ENCODE measurements at regions of chr12 and their contacts with region 1.

Region 1: GRCh38 chr12:56751712-56752598 is at the start of gene PRIM1:
- DNase-seq: peak; percentile 97
- H3K4me3 Mint-ChIP-seq: peak within 1 kb of the TSS; percentile 98
- H3K27ac Mint-ChIP-seq: peak within 1 kb of the TSS; percentile 99
- H3K4me1 Mint-ChIP-seq: peaks cover 39% of the 10 kb centered on the region
- H3K27me3 Mint-ChIP-seq: no peaks in the 10 kb centered on the region
- total RNA-seq, gene PRIM1: 69.2 and 74.0 TPM in 2 replicates

Region 2: DNA sequence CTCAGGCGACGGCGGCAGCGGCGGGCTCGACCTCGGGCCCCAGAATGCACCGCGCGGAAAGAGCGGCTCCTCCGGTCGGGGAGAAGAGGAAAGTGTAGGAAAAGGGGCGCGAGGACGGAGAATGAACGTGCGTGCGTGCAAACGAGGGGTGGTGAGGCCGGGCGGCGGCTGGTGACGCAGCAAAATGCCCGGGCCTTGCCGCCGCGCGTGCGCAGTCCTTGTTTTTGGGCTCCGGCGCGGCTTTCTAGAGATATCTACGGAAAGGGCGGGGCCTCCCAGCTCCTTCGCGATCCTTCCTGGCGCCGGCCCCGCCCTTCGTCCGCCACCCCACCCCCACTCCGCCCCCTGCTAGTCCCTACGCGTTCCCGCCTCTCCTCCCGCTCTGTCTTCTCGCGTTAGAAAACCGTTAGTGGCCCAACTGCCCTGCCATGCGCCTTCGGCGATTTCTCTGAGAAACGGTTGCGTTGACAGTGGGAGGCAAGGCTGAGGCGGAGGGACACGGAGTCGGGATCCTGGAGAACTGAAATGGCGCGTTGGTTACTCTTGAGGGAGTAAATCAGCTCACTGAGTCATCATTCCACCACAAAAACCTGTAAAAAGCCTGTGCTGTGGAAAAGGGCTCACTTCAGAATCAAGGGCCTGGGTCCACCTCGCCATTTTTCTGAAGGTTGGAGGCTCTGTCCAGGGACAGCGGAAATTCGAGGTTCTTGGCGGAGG is 63.7 kb before region 1 on chr12 and contains the start of gene PTGES3:
- intact Hi-C with region 1: loop called (anchors 1 kb)
- DNase-seq: peak; percentile 99
- H3K4me3 Mint-ChIP-seq: peak within 1 kb of the TSS; percentile 99
- H3K27ac Mint-ChIP-seq: peak within 1 kb of the TSS; percentile 97
- H3K4me1 Mint-ChIP-seq: peaks cover 24% of the 10 kb centered on the region
- H3K27me3 Mint-ChIP-seq: no peaks in the 10 kb centered on the region
- total RNA-seq, gene PTGES3: 351 and 357 TPM in 2 replicates

Region 3: DNA sequence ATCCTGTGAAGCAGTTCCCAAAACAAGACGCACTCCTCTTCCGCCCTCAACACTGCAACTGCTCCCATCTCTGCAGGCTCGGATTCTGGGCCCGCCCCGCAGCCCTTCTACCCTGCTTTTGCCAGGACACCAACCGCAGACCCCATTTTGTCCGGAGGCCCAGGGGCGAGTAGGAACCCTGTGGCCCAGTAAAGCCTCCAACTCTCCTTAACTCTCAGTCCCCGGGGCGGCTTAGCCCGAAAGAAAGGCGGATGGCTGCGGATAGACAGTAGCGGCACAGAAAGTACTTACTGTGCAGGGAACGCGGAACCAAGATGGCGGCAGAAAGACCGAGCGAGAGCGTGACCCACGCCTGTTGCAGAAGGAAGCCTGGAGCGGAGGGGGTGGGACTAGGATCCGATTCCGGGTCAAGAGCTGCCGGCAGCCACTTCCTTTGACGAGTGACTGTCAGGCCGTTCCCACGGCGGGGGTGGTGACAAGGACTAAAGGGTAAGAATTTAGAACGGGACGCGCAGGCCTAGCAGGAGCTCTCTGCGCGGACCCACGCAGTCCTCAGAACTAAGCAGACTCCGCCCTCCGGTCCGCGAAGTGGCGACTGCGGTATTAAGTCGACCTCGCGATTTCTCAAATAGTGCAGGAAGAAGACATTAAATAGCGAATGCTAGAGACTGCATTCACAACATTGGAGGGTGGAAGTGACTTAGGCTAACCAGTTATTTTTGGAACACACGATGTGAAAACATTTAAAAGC is 26.8 kb before region 1 on chr12 and contains the start of gene NACA:
- intact Hi-C with region 1: loop called (anchors 1 kb)
- DNase-seq: peak; percentile 99
- H3K4me3 Mint-ChIP-seq: peak within 1 kb of the TSS; percentile 99
- H3K27ac Mint-ChIP-seq: peak within 1 kb of the TSS; percentile 100
- H3K4me1 Mint-ChIP-seq: peaks cover 43% of the 10 kb centered on the region
- H3K27me3 Mint-ChIP-seq: no peaks in the 10 kb centered on the region
- total RNA-seq, gene NACA: 1,041 and 1,057 TPM in 2 replicates

Region 4: DNA sequence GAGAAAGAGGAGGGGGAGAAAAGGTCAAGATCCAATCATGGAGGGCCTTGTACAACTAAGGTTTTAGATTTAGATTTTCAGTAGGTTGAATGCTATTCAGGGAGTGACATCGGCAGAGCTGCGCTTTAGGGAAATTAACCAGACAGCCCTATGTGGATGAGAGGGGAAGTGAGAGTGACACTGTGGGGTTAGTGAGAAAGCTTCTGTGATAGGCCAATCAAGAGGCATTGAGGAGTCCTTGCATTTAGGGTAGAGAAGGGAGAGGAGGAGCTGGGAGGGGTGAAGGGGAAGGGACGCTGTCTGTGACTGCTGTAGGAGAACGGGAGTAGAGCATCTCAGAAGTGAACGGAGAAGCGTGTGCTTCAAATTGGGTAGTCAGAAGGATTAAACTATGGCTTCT is 14.6 kb after region 1 on chr12:
- intact Hi-C with region 1: no loop called
- DNase-seq: no peak
- H3K4me3 Mint-ChIP-seq: no peak overlapping the region
- H3K27ac Mint-ChIP-seq: no peak overlapping the region
- H3K4me1 Mint-ChIP-seq: no peaks in the 10 kb centered on the region
- H3K27me3 Mint-ChIP-seq: peaks cover 3% of the 10 kb centered on the region

Region 5: GRCh38 chr12:56897844-56898361 is 145.9 kb after region 1 on chr12:
- intact Hi-C with region 1: no loop called
- DNase-seq: no peak
- H3K4me3 Mint-ChIP-seq: no peak overlapping the region
- H3K27ac Mint-ChIP-seq: no peak overlapping the region
- H3K4me1 Mint-ChIP-seq: no peaks in the 10 kb centered on the region
- H3K27me3 Mint-ChIP-seq: no peaks in the 10 kb centered on the region

Region 6: GRCh38 chr12:56987551-56988053 is 235.6 kb after region 1 on chr12:
- intact Hi-C with region 1: loop called (anchors 1 kb)
- DNase-seq: peak; percentile 92
- H3K4me3 Mint-ChIP-seq: peak overlapping the region; percentile 24
- H3K27ac Mint-ChIP-seq: no peak overlapping the region
- H3K4me1 Mint-ChIP-seq: peaks cover 24% of the 10 kb centered on the region
- H3K27me3 Mint-ChIP-seq: peaks cover 8% of the 10 kb centered on the region

Region 7: GRCh38 chr12:57005980-57006808 is 254.2 kb after region 1 on chr12 and contains the start of gene ZBTB39:
- intact Hi-C with region 1: loop called (anchors 1 kb)
- DNase-seq: peak; percentile 92
- H3K4me3 Mint-ChIP-seq: peak within 1 kb of the TSS; percentile 93
- H3K27ac Mint-ChIP-seq: peak within 1 kb of the TSS; percentile 86
- H3K4me1 Mint-ChIP-seq: peaks cover 44% of the 10 kb centered on the region
- H3K27me3 Mint-ChIP-seq: no peaks in the 10 kb centered on the region
- total RNA-seq, gene ZBTB39: 11.0 TPM in 2 replicates

Region 8: DNA sequence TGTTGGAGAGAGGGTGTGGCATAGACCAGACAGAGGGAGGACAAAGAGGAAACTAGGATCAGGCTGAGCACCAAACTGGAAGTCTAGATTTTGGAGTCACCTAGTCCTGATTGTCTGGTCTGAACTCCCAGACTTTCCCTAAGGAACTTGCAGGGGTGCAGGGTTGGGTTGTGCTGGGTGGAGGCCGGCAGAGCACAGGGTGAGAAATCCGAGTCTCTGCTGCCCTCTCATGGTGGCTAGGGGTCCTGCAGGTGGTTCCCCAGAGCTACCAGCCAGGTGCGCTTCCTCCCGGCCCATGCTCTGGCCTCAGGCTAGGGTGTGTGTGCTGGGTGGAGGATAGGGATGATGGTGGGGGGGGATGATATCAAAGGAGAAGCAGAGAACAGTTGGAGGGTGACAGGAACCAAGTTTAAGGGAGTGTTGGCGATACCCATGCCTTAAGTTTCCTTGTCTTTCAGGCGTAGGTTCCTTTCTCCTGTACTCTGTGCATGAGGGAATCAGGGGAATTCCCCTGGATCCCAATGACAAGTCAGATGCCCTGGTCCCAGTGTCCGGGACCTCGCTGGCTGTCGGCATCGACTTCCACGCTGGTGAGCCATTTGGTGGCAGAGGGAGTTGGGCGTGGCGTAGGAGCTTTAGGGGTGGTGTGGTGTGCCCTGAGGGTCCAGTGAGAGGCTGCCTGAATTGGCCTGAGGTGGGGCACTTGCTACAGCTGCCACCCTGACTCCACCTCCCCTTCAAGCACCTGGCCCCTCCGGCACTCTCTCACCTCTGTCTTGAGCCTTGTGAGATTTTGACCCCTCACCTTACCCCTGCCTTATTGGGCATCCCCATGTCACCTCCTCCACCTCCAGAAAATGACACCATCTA is 431.2 kb after region 1 on chr12:
- intact Hi-C with region 1: loop called (anchors 10 kb)
- DNase-seq: peak; percentile 94
- H3K4me3 Mint-ChIP-seq: no peak overlapping the region
- H3K27ac Mint-ChIP-seq: no peak overlapping the region
- H3K4me1 Mint-ChIP-seq: peaks cover 7% of the 10 kb centered on the region
- H3K27me3 Mint-ChIP-seq: peaks cover 2% of the 10 kb centered on the region